Activated CD8-positive, alpha-beta T cell treated with anti-CD3 and anti-CD28 coated beads, Interleukin-2, amount 10 ng/mL, durations not matched to agents 7 days and 5 days (primary cell): ENCODE measurements at regions of chr20 and their contacts with region 1.

Region 1: DNA sequence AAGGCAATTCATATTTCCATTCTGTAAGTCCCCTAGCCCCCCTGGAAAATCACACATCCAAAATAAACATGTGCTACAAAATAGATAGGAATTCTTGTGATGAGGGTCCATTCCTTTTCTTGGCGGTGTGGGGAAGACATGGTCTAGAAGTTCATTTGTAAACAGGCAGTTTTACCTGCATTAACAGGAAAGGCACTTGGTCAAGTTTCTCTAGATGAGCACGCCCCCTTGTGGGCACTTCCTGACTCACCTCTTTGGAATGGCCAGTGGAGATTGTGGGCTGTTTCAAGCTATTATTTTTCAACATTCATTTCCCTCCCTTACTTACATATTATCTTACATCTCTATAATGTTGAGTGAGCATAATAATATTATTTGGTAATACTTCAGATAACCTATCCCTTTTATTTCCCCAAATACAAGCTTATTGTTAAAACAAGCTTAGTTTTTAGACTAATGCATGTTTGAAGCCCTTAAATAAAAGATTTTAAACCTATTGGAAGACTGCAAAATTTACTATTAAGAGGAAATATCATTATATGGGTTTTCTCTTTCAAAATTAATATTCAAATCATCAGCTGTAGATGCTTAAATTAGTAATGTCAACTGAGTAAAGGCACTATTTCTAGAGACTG is 92.1 kb downstream of the TASP1 start:
- DNase-seq: peak; percentile 80
- ATAC-seq: peak; percentile 68
- H3K4me3 Mint-ChIP-seq: no peak overlapping the region
- H3K27ac Mint-ChIP-seq: no peak overlapping the region
- H3K4me1 Mint-ChIP-seq: no peaks in the 10 kb centered on the region
- H3K27me3 Mint-ChIP-seq: no peaks in the 10 kb centered on the region

Region 2: DNA sequence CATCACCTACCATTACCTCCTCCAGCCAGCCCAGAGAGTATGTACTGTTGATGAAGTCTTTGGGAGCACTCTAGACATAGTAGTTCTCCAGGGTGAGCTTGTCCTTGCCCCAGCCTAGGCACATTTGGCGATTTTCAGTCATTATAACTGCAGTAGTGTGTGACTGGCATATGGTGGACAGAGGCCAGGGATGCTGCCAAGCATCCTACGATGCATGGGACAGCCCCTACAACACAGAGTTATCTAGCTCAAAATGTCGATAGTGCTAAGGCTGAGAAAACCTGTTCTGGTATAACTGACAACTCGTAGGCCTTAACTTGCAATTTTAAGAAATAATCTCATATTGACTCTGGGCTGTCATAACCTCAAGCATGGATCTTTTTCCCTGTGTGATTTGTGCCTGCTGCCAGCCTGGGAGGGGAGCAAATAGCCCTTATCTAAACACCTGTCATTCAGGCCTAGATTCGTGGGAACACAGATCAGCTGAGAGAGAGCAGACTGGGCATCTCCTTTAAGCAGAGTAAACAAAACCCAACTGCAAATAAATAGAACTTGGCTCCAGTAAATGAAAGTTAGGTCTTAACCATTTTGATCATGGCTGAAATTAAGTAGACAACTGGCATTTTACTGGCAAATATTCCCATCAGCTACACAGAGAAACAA is 435.2 kb before region 1 on chr20:
- CTCF ChIA-PET with region 1: interaction called, 29 read pairs
- POLR2A ChIA-PET with region 1: no interaction called
- DNase-seq: no peak
- ATAC-seq: no peak
- H3K4me3 Mint-ChIP-seq: no peak overlapping the region
- H3K27ac Mint-ChIP-seq: no peak overlapping the region
- H3K4me1 Mint-ChIP-seq: no peaks in the 10 kb centered on the region
- H3K27me3 Mint-ChIP-seq: no peaks in the 10 kb centered on the region

Region 3: DNA sequence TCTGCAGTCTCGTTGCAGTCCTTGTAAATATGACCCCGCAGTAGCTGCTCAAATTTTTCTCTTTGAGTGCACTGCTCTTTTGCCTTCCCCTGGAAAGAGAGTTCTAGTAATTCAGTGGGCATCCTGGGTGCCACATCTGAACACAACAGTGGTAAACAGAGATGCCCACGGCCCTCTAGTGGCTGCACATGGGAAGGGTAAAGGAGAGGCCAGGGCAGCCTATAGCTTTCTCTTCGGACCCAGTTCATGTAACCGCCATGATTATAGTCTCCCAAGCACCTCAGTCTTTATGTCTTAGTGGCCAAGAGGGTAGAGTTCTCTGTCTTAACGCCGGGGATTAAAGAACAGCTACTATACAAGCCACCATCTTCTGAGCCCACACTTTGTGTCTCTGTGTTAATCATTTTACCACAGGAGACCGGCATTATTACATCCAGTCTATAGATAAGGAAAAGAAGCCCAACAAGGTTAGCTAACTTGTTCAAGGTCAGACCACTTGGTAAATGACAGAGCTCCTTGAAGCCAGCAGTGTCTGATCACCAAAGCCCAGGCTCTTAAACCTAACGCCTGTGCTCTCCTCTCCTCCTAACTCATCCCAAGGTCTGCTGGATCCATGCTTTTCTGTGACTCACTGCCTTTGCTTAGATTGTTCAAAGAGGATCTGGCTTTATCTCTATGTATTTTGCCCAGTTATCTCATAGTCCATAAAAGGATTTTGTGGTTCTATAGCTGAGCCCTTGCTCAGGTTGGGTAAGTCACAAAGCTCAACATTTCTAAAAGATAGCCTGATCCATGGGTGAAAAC is 243.8 kb before region 1 on chr20:
- CTCF ChIA-PET with region 1: interaction called, 19 read pairs
- POLR2A ChIA-PET with region 1: no interaction called
- DNase-seq: peak; percentile 70
- ATAC-seq: peak; percentile 90
- H3K4me3 Mint-ChIP-seq: no peak overlapping the region
- H3K27ac Mint-ChIP-seq: no peak overlapping the region
- H3K4me1 Mint-ChIP-seq: no peaks in the 10 kb centered on the region
- H3K27me3 Mint-ChIP-seq: peaks cover 3% of the 10 kb centered on the region

Region 4: GRCh38 chr20:13458860-13459451 is 87.7 kb before region 1 on chr20:
- CTCF ChIA-PET with region 1: interaction called, 40 read pairs
- POLR2A ChIA-PET with region 1: no interaction called
- DNase-seq: peak; percentile 26
- ATAC-seq: no peak
- H3K4me3 Mint-ChIP-seq: no peak overlapping the region
- H3K27ac Mint-ChIP-seq: no peak overlapping the region
- H3K4me1 Mint-ChIP-seq: no peaks in the 10 kb centered on the region
- H3K27me3 Mint-ChIP-seq: no peaks in the 10 kb centered on the region

Region 5: DNA sequence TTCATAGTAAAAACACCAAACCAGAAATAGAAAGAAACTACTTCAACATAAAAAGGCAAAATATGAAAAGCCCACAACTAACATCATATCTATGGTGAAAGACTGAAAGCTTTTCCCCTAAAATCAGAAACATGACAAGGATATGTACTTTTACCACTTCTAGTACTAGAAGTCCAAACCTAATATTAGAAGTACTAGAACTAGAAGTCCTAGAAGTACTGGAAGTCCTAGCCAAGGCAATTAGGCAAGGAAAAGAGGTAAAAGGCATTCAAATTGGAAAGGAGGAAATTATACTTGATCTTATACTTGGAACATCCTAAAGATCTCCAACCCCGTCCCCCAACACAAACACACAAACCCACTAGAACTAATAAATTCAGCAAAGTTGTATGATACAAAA is 17.2 kb after region 1 on chr20:
- CTCF ChIA-PET with region 1: interaction called, 18 read pairs
- POLR2A ChIA-PET with region 1: no interaction called
- DNase-seq: no peak
- ATAC-seq: no peak
- H3K4me3 Mint-ChIP-seq: no peak overlapping the region
- H3K27ac Mint-ChIP-seq: no peak overlapping the region
- H3K4me1 Mint-ChIP-seq: no peaks in the 10 kb centered on the region
- H3K27me3 Mint-ChIP-seq: no peaks in the 10 kb centered on the region

Region 6: GRCh38 chr20:13771853-13772453 is 225.3 kb after region 1 on chr20:
- CTCF ChIA-PET with region 1: interaction called, 14 read pairs
- POLR2A ChIA-PET with region 1: no interaction called
- DNase-seq: no peak
- ATAC-seq: no peak
- H3K4me3 Mint-ChIP-seq: no peak overlapping the region
- H3K27ac Mint-ChIP-seq: no peak overlapping the region
- H3K4me1 Mint-ChIP-seq: peaks cover under 1% of the 10 kb centered on the region
- H3K27me3 Mint-ChIP-seq: no peaks in the 10 kb centered on the region